ENCODE measurements at regions of chr6 and their contacts with region 1.

Region 1: GRCh38 chr6:57316581-57317059 is 810 bp upstream of the PRIM2 start:
- DNase-seq: peak; percentile 78 to 85
- ATAC-seq: peak; percentile 86

Region 2: DNA sequence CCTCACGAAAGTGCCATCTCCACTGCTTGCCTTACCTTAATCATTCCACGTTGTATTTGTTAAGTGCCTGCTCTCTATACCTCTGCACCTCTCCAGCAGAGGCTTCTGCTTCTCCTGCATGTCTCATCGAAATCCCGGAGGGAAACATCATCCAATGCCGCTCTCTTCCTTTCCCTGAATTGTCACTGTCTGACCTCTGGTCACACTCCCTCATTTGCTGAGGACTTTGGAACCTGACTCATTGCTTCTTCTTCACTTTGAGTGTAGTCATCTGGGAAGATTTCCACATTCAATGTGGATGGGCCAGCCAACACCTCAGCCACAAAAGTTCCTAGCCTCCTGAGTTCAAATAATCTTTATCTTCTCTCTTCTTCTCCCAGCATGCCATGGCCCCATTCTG is 440.7 kb before region 1 on chr6:
- intact Hi-C with region 1: no loop called
- DNase-seq: peak in 1 of 2 donors; percentile 44
- ATAC-seq: peak; percentile 99

Region 3: GRCh38 chr6:57182017-57182432 is 134.6 kb before region 1 on chr6:
- intact Hi-C with region 1: loop called in 1 of 2 experiments (anchors 5 kb)
- DNase-seq: no peak
- ATAC-seq: no peak

Region 4: GRCh38 chr6:57242505-57242904 is 74.1 kb before region 1 on chr6:
- intact Hi-C with region 1: no loop called
- DNase-seq: no peak
- ATAC-seq: no peak

Measured in left colon (tissue), 2 donors.